WTC11 (cell line): ENCODE measurements at regions of chr11 and their contacts with region 1.

Region 1: DNA sequence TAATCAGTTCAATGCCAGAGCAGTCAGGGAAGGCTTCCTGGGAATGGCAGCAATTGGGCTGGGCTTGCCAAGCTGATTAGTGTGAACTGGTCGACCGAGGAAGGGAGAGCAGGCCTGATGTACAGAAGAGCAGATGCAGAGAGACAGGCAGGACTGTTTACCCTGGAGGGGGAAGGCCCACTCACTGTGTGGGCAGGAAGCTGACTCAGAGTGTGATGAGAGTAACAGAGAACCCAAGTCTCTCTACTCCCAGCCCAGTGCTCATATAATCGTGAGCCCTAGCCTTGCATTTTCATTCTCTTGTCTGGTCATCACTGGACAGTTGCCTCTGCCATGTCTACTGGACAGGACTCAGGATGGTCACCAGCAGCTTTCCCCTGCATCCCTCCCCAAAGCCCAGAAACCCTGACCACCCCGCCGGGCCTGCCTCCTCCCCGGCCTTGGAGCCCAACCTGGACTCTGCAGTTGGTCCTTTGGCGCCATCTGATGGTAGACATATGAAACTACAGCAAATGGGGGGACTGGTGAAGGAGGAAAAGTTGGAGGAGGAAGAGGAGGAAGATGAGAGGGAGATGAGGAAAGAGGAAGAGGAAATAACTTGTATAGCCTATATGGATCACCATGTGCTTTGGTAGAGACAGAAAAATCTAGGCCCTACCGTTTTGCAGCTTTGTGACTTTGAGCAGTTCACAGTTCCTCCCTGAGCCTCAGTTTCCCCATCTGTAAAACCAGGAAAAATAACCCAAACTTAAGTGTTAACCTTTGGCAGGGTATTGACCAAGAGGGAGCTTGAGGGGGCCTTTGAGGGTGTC is 43.4 kb upstream of the PRDM11 start:
- DNase-seq: peak; percentile 68
- ATAC-seq: peak; percentile 31
- H3K4me3 Mint-ChIP-seq: no peak overlapping the region
- H3K27ac Mint-ChIP-seq: no peak overlapping the region
- H3K4me1 Mint-ChIP-seq: peaks cover 11% of the 10 kb centered on the region
- H3K27me3 Mint-ChIP-seq: 0 out of 2 replicates have a peak, but pooled peaks cover 3% of the 10 kb centered on the region
- CTCF ChIP-seq: peak; percentile 88

Region 2: DNA sequence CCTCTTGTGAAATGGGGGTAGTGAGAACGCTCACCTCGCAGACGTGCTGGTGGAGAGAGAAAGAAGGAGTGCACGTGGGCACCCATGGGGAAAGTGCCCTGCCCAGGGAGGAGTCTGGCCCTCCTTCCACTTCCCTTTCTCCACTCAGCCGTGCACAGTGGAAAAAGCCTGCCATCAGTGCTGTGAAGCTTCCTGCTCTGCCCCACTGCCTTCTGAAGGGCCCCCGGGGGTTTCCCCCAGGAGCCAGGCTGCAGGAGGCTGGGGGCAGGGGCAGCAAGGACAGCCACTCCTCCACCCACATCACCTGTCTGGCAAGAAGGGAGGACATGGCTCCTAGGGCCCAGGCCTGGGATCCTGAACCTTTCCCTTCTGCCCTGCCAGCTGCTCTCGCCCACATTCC is 159.9 kb before region 1 on chr11:
- CTCF ChIA-PET with region 1: interaction called, 361 read pairs
- POLR2A ChIA-PET with region 1: interaction called, 3 read pairs
- DNase-seq: no peak
- ATAC-seq: no peak
- H3K4me3 Mint-ChIP-seq: no peak overlapping the region
- H3K27ac Mint-ChIP-seq: 0 out of 2 replicates have a peak overlapping the region, but pooled peaks have one; percentile 71
- H3K4me1 Mint-ChIP-seq: peaks cover 50% of the 10 kb centered on the region
- H3K27me3 Mint-ChIP-seq: no peaks in the 10 kb centered on the region
- CTCF ChIP-seq: no peak

Region 3: DNA sequence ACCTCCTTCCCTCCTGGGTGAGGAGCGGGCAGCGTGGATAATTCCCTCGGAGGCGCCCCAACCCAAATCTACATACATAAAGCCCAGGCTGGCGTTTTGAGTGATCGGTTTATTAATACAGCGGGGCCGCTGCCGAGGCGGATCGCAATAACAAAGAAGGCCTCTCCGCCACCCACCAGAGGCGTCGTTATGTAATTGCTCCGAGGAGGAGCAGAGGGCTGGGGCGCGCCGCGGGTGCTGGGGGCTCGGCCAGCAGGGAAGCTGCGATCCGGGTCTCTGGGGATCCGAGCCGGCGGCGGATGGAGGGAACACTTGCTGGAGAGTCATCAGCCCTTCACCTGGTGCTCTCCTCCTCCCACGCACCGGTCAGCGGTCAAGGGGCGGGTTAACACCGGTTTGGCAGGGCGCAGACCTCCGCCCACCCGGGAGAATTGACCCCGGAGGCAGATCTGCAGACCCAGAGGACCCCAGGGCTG is 145.9 kb before region 1 on chr11:
- CTCF ChIA-PET with region 1: interaction called, 13 read pairs
- POLR2A ChIA-PET with region 1: no interaction called
- DNase-seq: peak; percentile 52
- ATAC-seq: peak; percentile 18; the same call in 1 of the 2 replicates
- H3K4me3 Mint-ChIP-seq: peak overlapping the region; percentile 60
- H3K27ac Mint-ChIP-seq: no peak overlapping the region
- H3K4me1 Mint-ChIP-seq: peaks cover 80% of the 10 kb centered on the region
- H3K27me3 Mint-ChIP-seq: peaks cover 18% of the 10 kb centered on the region
- CTCF ChIP-seq: no peak

Region 4: DNA sequence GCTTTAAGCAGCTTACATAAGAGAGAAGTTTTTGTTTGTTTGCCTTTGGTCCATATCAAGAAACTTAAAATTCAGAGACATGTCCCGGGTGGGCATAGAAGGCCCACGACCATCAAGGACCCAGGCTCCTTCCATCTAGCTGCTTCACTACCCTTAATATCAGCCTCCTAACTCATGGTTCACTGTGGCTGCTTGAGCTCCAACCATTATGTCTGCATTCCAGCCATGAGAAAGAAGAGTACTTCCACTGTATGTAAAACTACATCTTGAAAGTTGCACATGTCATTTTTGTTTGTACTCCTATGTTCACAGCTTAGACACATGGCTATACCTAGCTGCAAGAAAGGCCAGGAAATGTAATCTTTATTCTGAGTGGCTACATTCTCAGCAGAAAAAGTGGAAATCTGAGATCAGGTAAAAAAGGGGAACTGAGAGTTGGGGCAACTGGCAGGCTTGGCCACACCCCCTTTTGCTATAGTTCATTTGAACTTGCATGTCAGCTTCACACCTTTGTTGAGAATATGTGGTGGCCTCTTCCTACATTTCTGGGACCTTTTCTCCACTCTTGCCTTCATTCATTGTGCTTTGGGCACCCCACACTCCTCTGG is 71.0 kb before region 1 on chr11:
- CTCF ChIA-PET with region 1: interaction called, 11 read pairs
- POLR2A ChIA-PET with region 1: no interaction called
- DNase-seq: no peak
- ATAC-seq: no peak
- H3K4me3 Mint-ChIP-seq: no peak overlapping the region
- H3K27ac Mint-ChIP-seq: no peak overlapping the region
- H3K4me1 Mint-ChIP-seq: no peaks in the 10 kb centered on the region
- H3K27me3 Mint-ChIP-seq: no peaks in the 10 kb centered on the region; the same call in 1 of the 2 replicates
- CTCF ChIP-seq: no peak

Region 5: GRCh38 chr11:45079943-45080719 is 22.9 kb before region 1 on chr11:
- CTCF ChIA-PET with region 1: interaction called, 58 read pairs
- POLR2A ChIA-PET with region 1: no interaction called
- DNase-seq: no peak
- ATAC-seq: no peak
- H3K4me3 Mint-ChIP-seq: no peak overlapping the region
- H3K27ac Mint-ChIP-seq: no peak overlapping the region
- H3K4me1 Mint-ChIP-seq: peaks cover 54% of the 10 kb centered on the region
- H3K27me3 Mint-ChIP-seq: no peaks in the 10 kb centered on the region; the same call in 1 of the 2 replicates
- CTCF ChIP-seq: no peak

Region 6: GRCh38 chr11:45332276-45332934 is 229.4 kb after region 1 on chr11:
- CTCF ChIA-PET with region 1: interaction called, 11 read pairs
- POLR2A ChIA-PET with region 1: no interaction called
- DNase-seq: peak; percentile 53
- ATAC-seq: peak; percentile 66
- H3K4me3 Mint-ChIP-seq: no peak overlapping the region
- H3K27ac Mint-ChIP-seq: no peak overlapping the region
- H3K4me1 Mint-ChIP-seq: peaks cover 7% of the 10 kb centered on the region
- H3K27me3 Mint-ChIP-seq: peaks cover 34% of the 10 kb centered on the region
- CTCF ChIP-seq: peak; percentile 93